ENCODE measurements at regions of chr6 and their contacts with region 1.

Region 1: GRCh38 chr6:10694302-10695085 is at the starts of genes C6orf52 and PAK1IP1:
- DNase-seq: peak; percentile 91 to 94 (median 92)
- H3K4me3 ChIP-seq: peak within 1 kb of the TSS; percentile 75
- H3K27ac ChIP-seq: peak within 1 kb of the TSS; percentile 69 to 90
- H3K4me1 ChIP-seq: peaks cover 7% of the 10 kb centered on the region
- H3K27me3 ChIP-seq: no peaks in the 10 kb centered on the region
- CTCF ChIP-seq: peak in 1 of 3 donors; percentile 26
- EP300 ChIP-seq: peak; percentile 24
- POLR2A ChIP-seq: peak; percentile 88
- total RNA-seq, gene C6orf52: 0.59 to 2.6 (median 2.0) TPM in 3 of 7 donors, not detected in the others
- total RNA-seq, gene PAK1IP1: 5.6 to 21.7 (median 12.4) TPM

Region 2: GRCh38 chr6:10747251-10747972 is 52.9 kb after region 1 on chr6 and contains the start of gene TMEM14B:
- intact Hi-C with region 1: loop called in 1 of 4 experiments (anchors 10 kb)
- DNase-seq: peak; percentile 100
- H3K4me3 ChIP-seq: peak within 1 kb of the TSS; percentile 84
- H3K27ac ChIP-seq: peak within 1 kb of the TSS in 1 of 2 donors; percentile 48
- H3K4me1 ChIP-seq: peaks cover 3% of the 10 kb centered on the region
- H3K27me3 ChIP-seq: no peaks in the 10 kb centered on the region
- CTCF ChIP-seq: no peak
- EP300 ChIP-seq: no peak
- POLR2A ChIP-seq: peak; percentile 62
- total RNA-seq, gene TMEM14B: 64.7 to 82.5 (median 72.4) TPM